ENCODE measurements at regions of chr12 and their contacts with region 1.

Region 1: GRCh38 chr12:55738123-55739024 is 4.5 kb upstream of the GDF11 start:
- DNase-seq: peak; percentile 48 to 85 (median 75)
- H3K4me3 ChIP-seq: peak overlapping the region; percentile 95
- H3K4me3 Mint-ChIP-seq: peak overlapping the region; percentile 81 to 96 (median 85)
- H3K27ac ChIP-seq: peak overlapping the region; percentile 82
- H3K27ac Mint-ChIP-seq: peak overlapping the region; percentile 91 to 98 (median 92)
- H3K4me1 ChIP-seq: peaks cover 25% of the 10 kb centered on the region
- H3K4me1 Mint-ChIP-seq: peaks cover 26 to 38% (median 27%) of the 10 kb centered on the region in 3 donors
- H3K27me3 ChIP-seq: no peaks in the 10 kb centered on the region
- H3K27me3 Mint-ChIP-seq: no peaks in the 10 kb centered on the region

Region 2: DNA sequence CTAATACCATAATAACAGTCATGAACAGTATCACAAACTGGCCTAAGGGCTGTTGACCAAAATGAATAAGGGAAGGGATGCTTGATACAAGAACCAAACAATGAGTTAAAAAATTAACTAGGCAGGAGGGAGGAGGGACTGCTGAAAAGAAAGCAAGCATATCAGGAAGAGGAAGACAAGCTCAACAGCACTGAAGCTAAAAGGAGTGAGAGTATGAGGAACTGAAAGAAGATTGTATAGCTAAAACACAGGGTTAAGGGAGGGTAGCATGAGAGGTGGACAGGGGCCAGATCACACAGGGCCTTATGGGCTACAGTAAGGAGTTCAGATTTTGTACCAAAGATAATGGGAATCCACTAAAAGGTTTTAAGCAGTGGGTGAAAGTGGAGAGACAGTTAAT is 64.7 kb before region 1 on chr12:
- CTCF ChIA-PET with region 1: no interaction called
- POLR2A ChIA-PET with region 1: no interaction called
- DNase-seq: no peak
- H3K4me3 ChIP-seq: no peak overlapping the region
- H3K4me3 Mint-ChIP-seq: no peak overlapping the region
- H3K27ac ChIP-seq: no peak overlapping the region
- H3K27ac Mint-ChIP-seq: no peak overlapping the region
- H3K4me1 ChIP-seq: no peaks in the 10 kb centered on the region
- H3K4me1 Mint-ChIP-seq: no peaks in the 10 kb centered on the region
- H3K27me3 ChIP-seq: no peaks in the 10 kb centered on the region
- H3K27me3 Mint-ChIP-seq: peaks cover 13 to 24% of the 10 kb centered on the region in 2 donors

Region 3: DNA sequence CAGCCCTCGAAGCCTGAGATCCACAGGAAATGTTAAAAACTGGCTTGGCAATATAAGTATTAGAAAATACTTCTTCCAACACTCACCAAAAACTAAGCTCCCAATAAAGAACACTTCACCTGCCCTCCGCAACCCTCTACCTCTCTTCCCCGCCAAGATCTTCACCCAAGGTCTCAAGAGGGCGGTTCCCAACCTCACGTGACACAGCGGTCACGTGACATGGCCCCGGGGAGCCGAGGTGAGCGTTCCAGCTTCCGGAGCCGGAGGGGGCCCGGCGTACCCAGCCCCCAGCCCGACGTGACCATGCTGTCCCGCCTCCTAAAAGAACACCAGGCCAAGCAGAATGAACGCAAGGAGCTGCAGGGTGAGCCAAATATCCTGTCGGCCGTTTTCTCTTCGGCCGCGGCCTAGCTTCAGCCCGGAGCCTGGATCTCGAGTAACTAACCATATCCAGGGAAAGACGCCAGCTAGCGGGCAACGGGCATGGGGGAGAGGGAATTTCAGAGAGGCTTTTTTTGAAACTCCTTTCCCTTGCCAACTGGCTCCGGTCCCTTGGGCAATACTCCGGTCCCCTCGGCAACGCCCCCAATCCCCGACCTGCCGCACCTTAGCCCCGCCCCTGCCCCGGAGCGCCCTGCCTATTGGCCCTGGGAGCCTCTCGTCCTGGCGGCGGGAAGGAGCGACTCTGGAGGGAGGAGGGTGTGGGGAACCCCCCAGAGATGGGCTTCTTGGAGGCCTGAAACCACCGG is 22.4 kb before region 1 on chr12 and contains the start of gene BLOC1S1:
- CTCF ChIA-PET with region 1: interaction called, 67 read pairs
- POLR2A ChIA-PET with region 1: interaction called, 8 read pairs
- DNase-seq: peak; percentile 87 to 96 (median 92)
- H3K4me3 ChIP-seq: peak within 1 kb of the TSS; percentile 98
- H3K4me3 Mint-ChIP-seq: peak within 1 kb of the TSS; percentile 82 to 97 (median 93)
- H3K27ac ChIP-seq: peak within 1 kb of the TSS; percentile 79
- H3K27ac Mint-ChIP-seq: peak within 1 kb of the TSS; percentile 89 to 98 (median 95)
- H3K4me1 ChIP-seq: peaks cover 21% of the 10 kb centered on the region
- H3K4me1 Mint-ChIP-seq: peaks cover 31 to 57% (median 33%) of the 10 kb centered on the region in 3 donors
- H3K27me3 ChIP-seq: no peaks in the 10 kb centered on the region
- H3K27me3 Mint-ChIP-seq: peaks cover 0 to 5% of the 10 kb centered on the region in 2 donors
- total RNA-seq, gene BLOC1S1: 97.5 to 110 TPM

Region 4: GRCh38 chr12:55797068-55797467 is 58.7 kb after region 1 on chr12:
- CTCF ChIA-PET with region 1: interaction called, 23 read pairs
- POLR2A ChIA-PET with region 1: no interaction called
- DNase-seq: no peak
- H3K4me3 ChIP-seq: no peak overlapping the region
- H3K4me3 Mint-ChIP-seq: no peak overlapping the region
- H3K27ac ChIP-seq: no peak overlapping the region
- H3K27ac Mint-ChIP-seq: peak overlapping the region in 1 of 8 donors; percentile 66
- H3K4me1 ChIP-seq: no peaks in the 10 kb centered on the region
- H3K4me1 Mint-ChIP-seq: peaks cover 3 to 15% (median 7%) of the 10 kb centered on the region in 3 donors
- H3K27me3 ChIP-seq: no peaks in the 10 kb centered on the region
- H3K27me3 Mint-ChIP-seq: no peaks in the 10 kb centered on the region

Region 5: DNA sequence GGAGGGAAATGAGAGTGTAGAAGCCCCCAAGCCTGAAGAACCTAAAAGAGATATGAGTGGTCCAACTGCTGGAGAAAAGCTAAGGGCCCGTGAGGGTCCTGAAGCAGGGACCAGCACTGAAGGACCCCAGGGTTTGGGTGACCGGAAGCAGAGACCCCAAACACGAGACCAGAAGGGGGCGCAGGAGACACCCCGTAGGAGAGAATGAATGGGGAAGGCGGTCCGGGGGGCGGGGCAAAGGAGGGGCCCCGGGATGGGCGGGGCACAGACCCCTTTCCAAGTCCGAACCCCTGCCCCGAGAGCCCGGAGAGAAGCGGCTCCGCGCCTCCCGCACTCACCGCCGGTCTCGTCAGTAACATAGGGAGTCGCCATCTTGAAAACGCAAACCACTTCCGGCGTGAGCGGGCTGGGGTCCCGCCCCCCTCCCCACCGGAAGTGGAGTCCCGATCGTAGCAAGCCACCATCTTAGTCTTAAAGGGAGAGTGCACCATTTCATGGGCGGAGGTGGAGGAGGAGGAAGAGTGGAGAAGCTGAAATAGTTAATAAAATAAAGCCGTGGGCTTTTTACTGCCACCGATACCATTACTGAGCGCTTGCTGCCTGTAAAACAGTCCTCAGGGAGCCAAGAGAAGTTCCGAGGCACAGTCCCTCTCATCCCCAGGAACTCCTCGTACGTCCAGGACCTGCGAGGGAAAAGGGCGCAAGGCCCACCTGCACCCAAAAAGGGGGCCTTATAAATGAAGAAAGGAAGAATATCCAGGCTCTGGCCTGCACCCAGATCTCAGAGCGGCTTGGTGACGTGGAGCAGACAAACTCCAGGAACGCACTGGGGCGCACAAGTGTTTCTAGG is 188.6 kb after region 1 on chr12:
- CTCF ChIA-PET with region 1: interaction called, 11 read pairs
- POLR2A ChIA-PET with region 1: interaction called, 8 read pairs
- DNase-seq: peak; percentile 82 to 94 (median 86)
- H3K4me3 ChIP-seq: peak overlapping the region; percentile 83
- H3K4me3 Mint-ChIP-seq: peak overlapping the region; percentile 94 to 100 (median 97)
- H3K27ac ChIP-seq: peak overlapping the region; percentile 79
- H3K27ac Mint-ChIP-seq: peak overlapping the region; percentile 91 to 99 (median 96)
- H3K4me1 ChIP-seq: peaks cover 46% of the 10 kb centered on the region
- H3K4me1 Mint-ChIP-seq: peaks cover 55 to 61% (median 58%) of the 10 kb centered on the region in 3 donors
- H3K27me3 ChIP-seq: no peaks in the 10 kb centered on the region
- H3K27me3 Mint-ChIP-seq: peaks cover 0 to 6% of the 10 kb centered on the region in 2 donors

Region 6: GRCh38 chr12:56029666-56030293 is 291.4 kb after region 1 on chr12:
- CTCF ChIA-PET with region 1: interaction called, 15 read pairs
- POLR2A ChIA-PET with region 1: no interaction called
- DNase-seq: peak in 2 of 5 donors; percentile 26 to 36
- H3K4me3 ChIP-seq: no peak overlapping the region
- H3K4me3 Mint-ChIP-seq: no peak overlapping the region
- H3K27ac ChIP-seq: no peak overlapping the region
- H3K27ac Mint-ChIP-seq: peak overlapping the region in 1 of 8 donors; percentile 45
- H3K4me1 ChIP-seq: no peaks in the 10 kb centered on the region
- H3K4me1 Mint-ChIP-seq: peaks cover 3 to 23% (median 7%) of the 10 kb centered on the region in 3 donors
- H3K27me3 ChIP-seq: no peaks in the 10 kb centered on the region
- H3K27me3 Mint-ChIP-seq: peaks cover 0 to 1% of the 10 kb centered on the region in 2 donors

Measured in CD8-positive, alpha-beta memory T cell (primary cell).